ENCODE measurements at regions of chr11 and their contacts with region 1.

Region 1: GRCh38 chr11:70397983-70398833 is at the start of gene CTTN:
- DNase-seq: peak; percentile 90 to 98 (median 96)
- ATAC-seq: peak; percentile 86
- H3K4me3 ChIP-seq: peak within 1 kb of the TSS; percentile 85
- H3K27ac ChIP-seq: peak within 1 kb of the TSS; percentile 87
- H3K4me1 ChIP-seq: peaks cover 23 to 26% of the 10 kb centered on the region in 2 experiments
- H3K27me3 ChIP-seq: no peaks in the 10 kb centered on the region
- CTCF ChIP-seq: no peak
- EP300 ChIP-seq: peak; percentile 6; the same call in 1 of the 2 replicates
- POLR2A ChIP-seq: peak; percentile 86
- RAD21 ChIP-seq: no peak
- polyA plus RNA-seq, gene CTTN: 9.9 to 23.1 TPM

Region 2: GRCh38 chr11:70016666-70017367 is 381.4 kb before region 1 on chr11:
- CTCF ChIA-PET with region 1: no interaction called
- POLR2A ChIA-PET with region 1: no interaction called
- in situ Hi-C with region 1: no loop called
- intact Hi-C with region 1: no loop called
- DNase-seq: no peak
- ATAC-seq: no peak
- H3K4me3 ChIP-seq: no peak overlapping the region
- H3K27ac ChIP-seq: no peak overlapping the region
- H3K4me1 ChIP-seq: peaks cover 0 to 8% of the 10 kb centered on the region in 2 experiments; a peak in 2 of 5 replicates
- H3K27me3 ChIP-seq: peaks cover 10 to 61% of the 10 kb centered on the region in 2 experiments
- CTCF ChIP-seq: no peak
- EP300 ChIP-seq: no peak
- POLR2A ChIP-seq: no peak
- RAD21 ChIP-seq: no peak

Region 3: DNA sequence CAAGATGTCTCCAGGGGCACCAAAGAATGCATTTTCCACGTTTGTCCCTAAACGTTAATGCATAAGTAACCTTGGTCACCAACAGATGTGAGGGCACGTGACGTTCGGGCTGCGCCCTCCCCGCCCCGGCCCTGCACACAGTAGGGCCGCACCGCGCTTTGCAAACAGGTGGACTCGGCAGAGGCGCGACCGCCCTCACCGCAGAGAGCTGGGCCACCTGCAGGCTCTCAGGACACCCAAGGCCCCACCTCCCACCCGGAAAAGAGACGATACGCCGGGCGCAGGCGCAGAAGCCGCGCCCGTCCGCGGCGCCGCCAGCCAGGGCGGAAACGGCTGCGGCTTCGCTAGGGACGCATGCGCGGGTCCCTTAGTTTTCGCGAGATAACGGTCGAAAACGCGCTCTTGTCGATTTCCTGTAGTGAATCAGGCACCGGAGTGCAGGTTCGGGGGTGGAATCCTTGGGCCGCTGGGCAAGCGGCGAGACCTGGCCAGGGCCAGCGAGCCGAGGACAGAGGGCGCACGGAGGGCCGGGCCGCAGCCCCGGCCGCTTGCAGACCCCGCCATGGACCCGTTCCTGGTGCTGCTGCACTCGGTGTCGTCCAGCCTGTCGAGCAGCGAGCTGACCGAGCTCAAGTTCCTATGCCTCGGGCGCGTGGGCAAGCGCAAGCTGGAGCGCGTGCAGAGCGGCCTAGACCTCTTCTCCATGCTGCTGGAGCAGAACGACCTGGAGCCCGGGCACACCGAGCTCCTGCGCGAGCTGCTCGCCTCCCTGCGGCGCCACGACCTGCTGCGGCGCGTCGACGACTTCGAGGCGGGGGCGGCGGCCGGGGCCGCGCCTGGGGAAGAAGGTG is 195.1 kb before region 1 on chr11 and contains the start of gene FADD:
- CTCF ChIA-PET with region 1: no interaction called
- POLR2A ChIA-PET with region 1: interaction called, 3 read pairs
- in situ Hi-C with region 1: no loop called
- intact Hi-C with region 1: loop called (anchors 10 kb)
- DNase-seq: peak; percentile 93 to 96 (median 95)
- ATAC-seq: peak; percentile 89
- H3K4me3 ChIP-seq: peak within 1 kb of the TSS; percentile 94
- H3K27ac ChIP-seq: peak within 1 kb of the TSS; percentile 91
- H3K4me1 ChIP-seq: peaks cover 15 to 37% of the 10 kb centered on the region in 2 experiments; a peak in 4 of 5 replicates
- H3K27me3 ChIP-seq: peaks cover 0 to 9% of the 10 kb centered on the region in 2 experiments; a peak in 1 of 5 replicates
- CTCF ChIP-seq: no peak
- EP300 ChIP-seq: 0 out of 2 replicates have a peak, but pooled peaks have one; percentile 17
- POLR2A ChIP-seq: peak; percentile 89
- RAD21 ChIP-seq: no peak
- polyA plus RNA-seq, gene FADD: 0.29 to 0.30 TPM

Region 4: DNA sequence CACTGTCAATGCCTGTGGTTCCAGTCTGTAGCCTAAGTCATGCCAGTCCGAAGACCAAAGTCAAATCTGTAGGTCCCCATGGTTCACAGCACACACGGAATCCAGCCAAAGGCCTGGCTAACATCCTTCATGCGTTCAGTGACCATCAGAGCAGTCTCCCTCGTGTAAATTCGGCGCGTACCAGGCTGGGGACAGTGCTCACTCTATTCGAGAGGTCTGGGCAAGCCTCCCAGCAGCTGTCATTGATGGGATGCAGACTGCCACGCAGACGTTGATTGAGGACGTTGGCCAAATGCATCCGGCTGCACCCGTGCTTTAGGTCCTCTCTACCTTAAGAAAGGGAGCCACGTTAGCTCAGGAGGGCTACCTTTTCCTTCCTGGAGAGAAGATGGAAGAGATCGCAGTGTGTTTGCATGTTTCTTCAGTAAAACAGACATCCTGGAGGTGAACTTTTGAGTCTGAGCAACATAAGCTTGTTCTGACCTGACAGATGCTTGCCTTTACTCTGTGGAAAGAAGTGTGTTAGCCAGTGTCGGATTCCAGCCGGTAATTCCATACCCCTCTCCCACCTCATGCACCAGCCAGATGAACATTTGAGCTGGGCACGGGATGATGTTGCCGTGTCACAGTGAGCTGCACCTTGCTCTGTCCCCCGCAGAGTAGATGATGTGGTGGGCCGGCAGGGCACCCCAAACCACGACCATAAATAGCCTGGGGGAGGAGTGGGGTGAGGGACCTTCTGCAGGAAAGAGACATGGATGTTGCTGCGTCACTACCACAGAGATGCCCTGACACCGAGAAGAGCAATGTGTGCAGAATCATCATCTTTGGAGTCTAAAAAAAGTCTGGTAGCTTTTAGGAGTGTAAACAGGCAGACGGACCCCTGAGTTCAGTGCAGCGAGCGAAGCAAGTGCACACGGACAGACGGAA is 12.3 kb after region 1 on chr11:
- CTCF ChIA-PET with region 1: no interaction called
- POLR2A ChIA-PET with region 1: interaction called, 17 read pairs
- in situ Hi-C with region 1: no loop called
- intact Hi-C with region 1: no loop called
- DNase-seq: no peak
- ATAC-seq: no peak
- H3K4me3 ChIP-seq: no peak overlapping the region
- H3K27ac ChIP-seq: no peak overlapping the region
- H3K4me1 ChIP-seq: no peaks in the 10 kb centered on the region
- H3K27me3 ChIP-seq: no peaks in the 10 kb centered on the region
- CTCF ChIP-seq: no peak
- EP300 ChIP-seq: no peak
- POLR2A ChIP-seq: no peak
- RAD21 ChIP-seq: no peak

Measured in K562 (cell line).